Ovary (tissue), 10 donors: ENCODE measurements at regions of chr17 and their contacts with region 1.

Region 1: GRCh38 chr17:8300627-8301242 is 5.5 kb upstream of the SLC25A35 start:
- DNase-seq: peak; percentile 53 to 65 (median 58)
- H3K4me3 ChIP-seq: no peak overlapping the region
- H3K27ac ChIP-seq: no peak overlapping the region
- H3K4me1 ChIP-seq: no peaks in the 10 kb centered on the region
- H3K27me3 ChIP-seq: no peaks in the 10 kb centered on the region
- CTCF ChIP-seq: peak; percentile 75 to 77 (median 75)
- EP300 ChIP-seq: no peak
- POLR2A ChIP-seq: peak; percentile 16

Region 2: DNA sequence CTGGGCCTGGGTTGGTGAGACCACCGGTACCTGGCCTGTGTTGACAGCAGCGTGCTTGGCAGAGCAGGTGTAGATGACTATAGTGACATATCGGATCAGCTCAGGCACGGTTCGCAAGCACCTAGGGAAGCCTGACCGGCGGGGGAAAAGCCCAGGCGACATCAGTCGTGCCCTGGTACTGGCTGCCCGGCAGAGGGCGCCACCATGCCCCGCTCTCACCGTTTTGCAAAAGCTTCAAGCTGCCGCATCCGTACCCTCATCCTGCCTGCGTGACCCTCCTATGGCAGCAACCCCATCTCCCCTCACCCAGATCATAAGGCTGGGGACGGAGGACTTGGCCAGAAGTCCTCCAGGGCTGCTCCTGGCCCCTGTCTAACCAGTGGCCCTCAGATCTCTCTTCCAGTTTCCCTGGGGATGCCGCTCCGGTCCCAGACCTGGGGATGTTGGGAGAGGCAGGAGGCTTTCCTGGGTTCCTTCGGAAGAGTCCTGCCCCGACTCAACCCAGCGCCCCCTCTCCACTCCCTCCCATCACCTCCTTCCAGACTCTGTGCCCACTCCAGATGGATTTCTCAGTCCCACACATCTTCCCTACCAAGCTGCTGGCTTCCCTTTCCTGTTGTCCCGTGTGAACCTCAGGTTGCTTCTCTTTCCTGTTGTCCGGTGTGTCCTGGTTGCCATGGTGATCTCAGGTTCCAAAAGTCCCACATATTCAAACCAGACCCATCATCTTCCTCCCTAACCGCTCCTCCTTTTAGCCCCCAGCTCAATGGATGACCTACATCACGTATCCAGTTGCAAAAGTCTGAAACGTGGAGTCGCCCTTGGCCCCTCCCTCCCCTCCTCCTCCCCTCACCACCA is 226.9 kb before region 1 on chr17:
- intact Hi-C with region 1: loop called in 3 of 4 experiments (anchors 5 to 10 kb)
- DNase-seq: peak; percentile 33 to 70 (median 58)
- H3K4me3 ChIP-seq: no peak overlapping the region
- H3K27ac ChIP-seq: no peak overlapping the region
- H3K4me1 ChIP-seq: no peaks in the 10 kb centered on the region
- H3K27me3 ChIP-seq: no peaks in the 10 kb centered on the region
- CTCF ChIP-seq: peak in 2 of 3 donors; percentile 35 to 49
- EP300 ChIP-seq: no peak
- POLR2A ChIP-seq: no peak

Region 3: GRCh38 chr17:8079291-8080207 is 221.2 kb before region 1 on chr17:
- intact Hi-C with region 1: loop called (anchors 5 to 10 kb)
- DNase-seq: peak; percentile 58 to 84 (median 74)
- H3K4me3 ChIP-seq: peak overlapping the region; percentile 37
- H3K27ac ChIP-seq: no peak overlapping the region
- H3K4me1 ChIP-seq: peaks cover 5% of the 10 kb centered on the region
- H3K27me3 ChIP-seq: no peaks in the 10 kb centered on the region
- CTCF ChIP-seq: peak; percentile 80 to 90 (median 80)
- EP300 ChIP-seq: no peak
- POLR2A ChIP-seq: no peak

Region 4: GRCh38 chr17:8435245-8436168 is 134.8 kb after region 1 on chr17 and contains the start of gene NDEL1:
- intact Hi-C with region 1: no loop called
- DNase-seq: peak; percentile 99 to 100 (median 99)
- H3K4me3 ChIP-seq: peak within 1 kb of the TSS; percentile 89
- H3K27ac ChIP-seq: peak within 1 kb of the TSS; percentile 97 to 99
- H3K4me1 ChIP-seq: peaks cover 2% of the 10 kb centered on the region
- H3K27me3 ChIP-seq: no peaks in the 10 kb centered on the region
- CTCF ChIP-seq: no peak
- EP300 ChIP-seq: peak; percentile 68
- POLR2A ChIP-seq: peak; percentile 98
- total RNA-seq, gene NDEL1: 57.1 to 86.5 (median 63.2) TPM